ENCODE measurements at regions of chr4 and their contacts with region 1.

Region 1: DNA sequence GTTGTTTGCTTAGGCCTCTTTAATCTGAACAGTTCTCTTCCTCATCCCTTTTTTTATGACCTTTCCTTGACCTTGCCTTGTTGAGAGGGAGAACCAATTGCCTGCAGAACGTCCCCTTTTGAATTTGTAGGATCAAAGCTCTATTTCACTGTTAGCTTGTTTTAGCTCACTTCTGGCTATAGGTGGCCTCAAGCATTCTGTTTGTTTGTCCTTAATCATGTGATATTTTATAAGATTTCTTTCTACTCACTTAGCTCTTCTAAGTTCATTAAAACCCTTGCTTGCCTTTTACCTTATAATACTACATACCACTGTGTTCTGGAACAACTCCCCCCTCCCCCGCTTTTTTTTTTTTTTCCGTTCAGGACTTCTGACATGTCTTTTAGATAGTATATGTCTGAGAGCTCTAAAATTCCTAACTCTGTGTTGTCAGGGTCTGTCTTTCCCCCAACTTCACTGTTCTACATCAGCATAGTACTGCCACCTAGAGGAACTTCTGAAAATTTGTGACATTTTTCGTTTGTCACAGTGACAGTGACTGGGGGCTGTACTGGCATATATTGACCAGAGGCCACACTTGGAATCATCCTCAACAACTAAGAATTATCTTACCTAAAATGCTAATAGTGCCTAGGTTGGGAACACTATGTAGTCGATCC is 128.5 kb downstream of the LARP7 start:
- DNase-seq: peak; percentile 42 to 77
- H3K4me3 ChIP-seq: no peak overlapping the region
- H3K4me1 ChIP-seq: peaks cover 3% of the 10 kb centered on the region; the same call in 1 of the 2 replicates
- H3K27me3 ChIP-seq: no peaks in the 10 kb centered on the region

Region 2: DNA sequence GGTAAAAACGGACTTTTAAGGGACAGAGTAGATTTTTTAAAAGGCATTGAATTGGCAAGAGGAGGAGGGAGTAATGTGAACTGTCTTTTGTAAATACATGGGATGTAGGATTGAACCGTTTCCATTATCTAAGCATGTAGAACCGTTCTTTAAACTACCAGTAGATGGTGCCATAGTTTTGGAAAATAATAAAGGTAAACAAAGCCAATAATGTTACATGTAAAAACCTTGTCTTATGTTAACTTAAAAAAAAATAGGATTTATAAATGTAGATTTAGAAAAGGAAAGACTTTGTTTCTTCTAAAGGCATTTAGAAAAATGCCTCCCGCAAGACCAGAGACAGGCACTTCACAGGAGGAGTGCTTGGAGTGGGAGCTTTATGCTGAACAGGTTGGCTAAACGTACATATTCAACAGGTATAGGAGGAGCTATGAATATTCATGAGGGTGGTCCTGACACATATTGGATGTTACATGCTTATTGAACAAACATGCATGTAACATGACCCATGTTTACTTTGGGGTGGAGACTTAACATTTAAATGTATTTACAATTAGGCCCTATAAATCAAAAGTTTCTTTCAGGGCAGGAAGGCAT is 665.6 kb before region 1 on chr4:
- in situ Hi-C with region 1: loop called (anchors 25 kb)
- DNase-seq: peak in 1 of 2 experiments; percentile 64
- H3K4me3 ChIP-seq: no peak overlapping the region
- H3K4me1 ChIP-seq: no peaks in the 10 kb centered on the region
- H3K27me3 ChIP-seq: peaks cover 18% of the 10 kb centered on the region; the same call in 1 of the 2 replicates

Region 3: GRCh38 chr4:112327965-112328733 is 437.3 kb before region 1 on chr4:
- in situ Hi-C with region 1: loop called (anchors 10 kb)
- DNase-seq: peak in 1 of 2 experiments; percentile 90
- H3K4me3 ChIP-seq: no peak overlapping the region
- H3K4me1 ChIP-seq: peaks cover 5% of the 10 kb centered on the region
- H3K27me3 ChIP-seq: no peaks in the 10 kb centered on the region

Region 4: GRCh38 chr4:112448306-112449132 is 316.9 kb before region 1 on chr4:
- in situ Hi-C with region 1: no loop called
- DNase-seq: peak; percentile 93 to 99
- H3K4me3 ChIP-seq: no peak overlapping the region
- H3K4me1 ChIP-seq: peaks cover 35% of the 10 kb centered on the region
- H3K27me3 ChIP-seq: no peaks in the 10 kb centered on the region

Region 5: GRCh38 chr4:112532267-112532666 is 233.2 kb before region 1 on chr4:
- in situ Hi-C with region 1: loop called (anchors 25 kb)
- DNase-seq: no peak
- H3K4me3 ChIP-seq: no peak overlapping the region
- H3K4me1 ChIP-seq: no peaks in the 10 kb centered on the region
- H3K27me3 ChIP-seq: no peaks in the 10 kb centered on the region

Region 6: DNA sequence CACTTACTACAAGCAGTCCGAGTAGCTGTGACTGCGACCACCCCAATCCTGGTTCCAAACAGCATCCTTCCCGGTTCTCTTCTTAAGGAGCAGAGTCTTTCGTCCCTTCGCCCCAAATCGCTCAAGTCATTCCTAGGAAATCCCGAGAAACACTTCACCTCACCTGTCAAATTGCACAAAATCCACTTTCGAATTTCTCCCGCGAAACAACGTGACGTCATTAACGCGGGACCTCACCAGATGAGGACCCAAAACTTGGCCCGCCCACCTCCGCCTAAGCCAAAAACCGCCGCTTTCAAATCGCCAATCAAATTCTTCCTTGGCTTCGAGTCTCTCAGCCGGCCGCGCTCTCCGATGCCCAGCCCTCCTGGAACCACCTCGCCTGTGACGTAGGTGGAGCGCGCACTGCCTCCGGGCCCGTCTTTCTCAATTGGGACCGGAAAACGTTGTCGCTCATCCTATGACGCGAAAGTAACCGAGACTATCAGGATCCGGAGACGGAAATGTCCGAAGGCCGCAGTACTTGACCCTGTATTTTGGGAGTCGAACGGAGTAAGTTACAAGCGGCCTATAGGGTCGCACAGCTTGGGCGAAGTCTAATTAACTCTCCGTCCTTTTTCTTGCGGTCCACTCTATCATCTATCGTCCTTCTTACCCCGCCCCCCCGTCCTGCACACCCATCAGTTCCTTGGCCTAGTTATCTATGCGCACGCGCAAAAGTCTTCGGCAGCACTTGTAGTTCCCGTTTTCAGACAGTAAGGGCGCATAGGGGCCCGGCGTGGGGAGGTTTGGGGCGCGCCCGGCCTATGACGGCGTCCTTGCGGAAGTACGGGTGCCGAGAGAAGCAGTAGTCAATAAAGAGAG is 128.5 kb before region 1 on chr4 and contains the starts of genes LARP7 and ZGRF1:
- in situ Hi-C with region 1: loop called (anchors 5 kb)
- DNase-seq: peak; percentile 98 to 99
- H3K4me3 ChIP-seq: peak within 1 kb of the TSS; percentile 64
- H3K4me1 ChIP-seq: peaks cover 10% of the 10 kb centered on the region
- H3K27me3 ChIP-seq: no peaks in the 10 kb centered on the region

Region 7: GRCh38 chr4:112674376-112674775 is 91.1 kb before region 1 on chr4:
- in situ Hi-C with region 1: no loop called
- DNase-seq: no peak
- H3K4me3 ChIP-seq: no peak overlapping the region
- H3K4me1 ChIP-seq: no peaks in the 10 kb centered on the region
- H3K27me3 ChIP-seq: no peaks in the 10 kb centered on the region

Region 8: DNA sequence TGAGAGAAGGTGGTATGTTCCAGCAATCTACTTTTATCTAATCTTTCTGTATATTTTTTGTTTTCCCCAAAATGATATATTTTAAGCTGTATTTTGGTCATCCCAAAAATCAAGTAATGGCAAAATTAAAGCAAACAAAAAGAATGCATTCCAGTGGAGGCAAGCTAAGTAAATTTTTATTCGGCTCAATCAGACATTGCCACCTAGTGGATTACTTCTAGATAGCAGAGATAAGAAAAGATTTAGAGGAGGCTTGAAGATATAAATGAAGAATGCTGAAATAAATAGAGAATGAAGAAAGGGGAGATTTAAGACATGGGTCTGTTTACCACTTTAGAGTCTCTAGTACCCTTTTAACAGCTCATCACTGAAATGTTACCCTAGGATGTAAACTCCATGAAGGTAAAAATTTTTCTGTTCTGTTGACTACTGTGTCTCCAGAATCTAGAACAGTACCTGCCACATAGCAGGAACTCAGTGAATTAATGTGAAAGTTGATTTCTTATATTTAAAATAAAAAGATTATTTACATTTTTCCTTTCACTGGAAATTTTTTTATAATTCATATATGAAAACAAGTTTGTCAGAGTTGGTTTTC is 173.1 kb after region 1 on chr4:
- in situ Hi-C with region 1: loop called (anchors 10 kb)
- DNase-seq: peak in 1 of 2 experiments; percentile 73
- H3K4me3 ChIP-seq: no peak overlapping the region
- H3K4me1 ChIP-seq: peaks cover 29% of the 10 kb centered on the region
- H3K27me3 ChIP-seq: no peaks in the 10 kb centered on the region

Measured in HAP-1 (cell line).